ENCODE measurements at regions of chr1 and their contacts with region 1.

Region 1: DNA sequence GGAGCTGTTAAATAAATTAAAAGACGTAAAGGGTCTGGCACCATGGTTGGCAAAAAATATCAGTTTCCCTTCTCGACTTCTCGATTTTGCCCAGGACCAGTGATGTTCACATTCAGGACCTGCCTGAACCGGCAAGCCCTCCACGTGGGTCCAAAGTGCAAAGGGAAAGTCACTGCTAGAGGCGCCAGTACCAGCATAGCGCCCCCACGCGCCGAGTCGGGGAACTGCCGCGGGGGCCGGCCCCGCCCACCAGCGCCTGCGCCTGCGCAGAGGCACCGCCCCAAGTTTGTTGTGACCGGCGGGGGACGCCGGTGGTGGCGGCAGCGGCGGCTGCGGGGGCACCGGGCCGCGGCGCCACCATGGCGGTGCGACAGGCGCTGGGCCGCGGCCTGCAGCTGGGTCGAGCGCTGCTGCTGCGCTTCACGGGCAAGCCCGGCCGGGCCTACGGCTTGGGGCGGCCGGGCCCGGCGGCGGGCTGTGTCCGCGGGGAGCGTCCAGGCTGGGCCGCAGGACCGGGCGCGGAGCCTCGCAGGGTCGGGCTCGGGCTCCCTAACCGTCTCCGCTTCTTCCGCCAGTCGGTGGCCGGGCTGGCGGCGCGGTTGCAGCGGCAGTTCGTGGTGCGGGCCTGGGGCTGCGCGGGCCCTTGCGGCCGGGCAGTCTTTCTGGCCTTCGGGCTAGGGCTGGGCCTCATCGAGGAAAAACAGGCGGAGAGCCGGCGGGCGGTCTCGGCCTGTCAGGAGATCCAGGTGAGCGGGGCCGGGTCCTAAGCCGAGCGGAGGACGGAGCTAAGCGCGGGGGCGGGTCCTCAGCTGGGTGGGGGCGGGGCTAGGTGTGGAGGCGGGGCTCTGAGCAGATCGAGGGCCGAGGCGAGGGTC is at the start of gene PINK1:
- DNase-seq: peak; percentile 95

Region 2: DNA sequence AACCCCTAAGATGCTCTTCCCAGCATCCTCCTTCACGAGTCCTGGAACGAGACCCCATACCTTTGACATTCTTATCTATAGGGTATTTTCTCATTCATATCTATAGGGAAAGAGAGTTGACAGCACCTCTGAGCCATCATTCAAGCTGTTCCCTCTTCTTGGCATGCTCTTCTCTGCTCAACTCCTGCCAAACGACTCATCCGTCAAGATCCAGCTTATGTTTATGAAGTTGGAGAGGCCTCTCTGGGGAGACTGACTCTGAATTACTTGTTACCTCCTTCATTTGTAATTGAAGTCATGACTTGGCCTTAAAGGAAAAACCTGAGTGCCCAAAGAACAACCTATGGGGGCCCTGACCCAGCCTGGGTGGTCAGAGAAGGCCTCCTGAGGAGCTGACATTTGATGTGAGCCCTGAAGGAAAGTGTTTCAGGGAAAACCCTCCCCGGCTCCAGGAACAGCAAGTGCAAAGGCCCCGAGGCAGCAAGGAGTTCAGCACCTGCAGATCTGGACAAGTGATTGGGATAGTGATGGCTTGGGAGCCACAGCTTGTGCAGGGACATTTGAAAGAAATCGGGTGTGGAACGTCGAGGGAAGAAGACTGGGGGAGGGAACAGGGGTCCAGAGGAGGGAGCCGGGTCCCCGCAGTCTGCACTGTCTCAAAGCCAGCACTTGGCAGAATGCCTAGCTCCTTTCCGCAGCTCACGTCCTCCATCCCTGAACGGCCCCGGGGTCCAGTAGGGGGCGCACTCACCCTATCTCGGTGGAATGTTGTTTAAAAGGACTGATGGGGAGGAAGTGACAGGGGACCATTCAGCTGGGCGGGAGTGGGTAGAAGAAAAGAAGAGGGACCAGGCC is 58.5 kb before region 1 on chr1:
- in situ Hi-C with region 1: loop called (anchors 10 kb)
- DNase-seq: peak; percentile 94